B cell (primary cell): ENCODE measurements at regions of chrX and their contacts with region 1.

Region 1: DNA sequence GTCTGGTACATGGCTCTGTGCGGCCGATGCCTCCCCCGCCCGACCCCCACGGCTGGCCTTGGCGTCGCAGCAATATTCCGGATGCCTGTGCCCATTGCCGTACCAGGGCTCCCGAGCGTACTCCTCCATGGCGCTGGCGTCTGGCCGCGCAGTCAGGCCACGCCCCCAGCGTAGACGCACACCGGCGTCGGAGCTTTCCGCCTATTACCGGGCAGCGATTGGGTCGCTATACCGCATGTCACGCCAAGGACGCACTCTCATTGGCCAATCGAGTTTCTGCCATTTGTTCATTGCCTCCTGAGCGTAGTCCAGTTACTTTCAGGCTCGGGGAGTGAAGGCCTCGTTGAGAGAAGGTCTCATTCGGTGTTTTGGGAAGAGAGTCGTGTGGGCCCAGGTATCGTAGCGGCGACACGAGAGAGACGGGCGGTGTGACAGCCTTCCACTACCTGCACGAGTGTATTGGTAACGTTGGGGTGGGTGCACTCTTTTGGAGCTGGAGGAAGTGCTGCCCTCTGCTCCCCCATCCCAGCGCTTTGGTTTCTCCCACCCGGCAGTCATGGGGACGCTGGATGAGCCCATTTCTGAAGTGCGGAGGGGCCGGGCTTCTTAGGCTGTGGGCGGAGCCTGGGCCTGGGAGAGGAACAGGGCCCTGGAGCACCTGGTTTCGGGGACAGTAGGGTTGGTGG is at the starts of genes PQBP1 and TIMM17B:
- DNase-seq: peak; percentile 95
- ATAC-seq: peak; percentile 88
- H3K4me3 ChIP-seq: peak within 1 kb of the TSS; percentile 81 to 91 (median 86)
- H3K4me3 Mint-ChIP-seq: peak within 1 kb of the TSS; percentile 89
- H3K27ac ChIP-seq: peak within 1 kb of the TSS; percentile 93 to 94
- H3K27ac Mint-ChIP-seq: peak within 1 kb of the TSS; percentile 94
- H3K4me1 ChIP-seq: peaks cover 12 to 20% of the 10 kb centered on the region in 2 donors
- H3K4me1 Mint-ChIP-seq: peaks cover 22% of the 10 kb centered on the region
- H3K27me3 ChIP-seq: no peaks in the 10 kb centered on the region
- H3K27me3 Mint-ChIP-seq: no peaks in the 10 kb centered on the region
- CTCF ChIP-seq: no peak
- total RNA-seq, gene PQBP1: 89.5 and 89.9 TPM in 2 replicates
- total RNA-seq, gene TIMM17B: 50.0 and 54.3 TPM in 2 replicates

Region 2: GRCh38 chrX:47836164-47837072 is 1061.3 kb before region 1 on chrX and contains the start of gene ZNF81:
- CTCF ChIA-PET with region 1: no interaction called
- POLR2A ChIA-PET with region 1: no interaction called
- intact Hi-C with region 1: loop called (anchors 10 kb)
- DNase-seq: peak; percentile 93
- ATAC-seq: peak; percentile 97
- H3K4me3 ChIP-seq: peak within 1 kb of the TSS; percentile 66 to 76 (median 70)
- H3K4me3 Mint-ChIP-seq: peak within 1 kb of the TSS; percentile 99
- H3K27ac ChIP-seq: peak within 1 kb of the TSS; percentile 64 to 73
- H3K27ac Mint-ChIP-seq: peak within 1 kb of the TSS; percentile 98
- H3K4me1 ChIP-seq: peaks cover 9% of the 10 kb centered on the region in 2 donors
- H3K4me1 Mint-ChIP-seq: peaks cover 24% of the 10 kb centered on the region
- H3K27me3 ChIP-seq: no peaks in the 10 kb centered on the region
- H3K27me3 Mint-ChIP-seq: no peaks in the 10 kb centered on the region
- CTCF ChIP-seq: no peak
- total RNA-seq, gene ZNF81: 15.3 and 17.7 TPM in 2 replicates

Region 3: GRCh38 chrX:48606091-48606490 is 291.7 kb before region 1 on chrX:
- CTCF ChIA-PET with region 1: no interaction called
- POLR2A ChIA-PET with region 1: no interaction called
- intact Hi-C with region 1: no loop called
- DNase-seq: no peak
- ATAC-seq: no peak
- H3K4me3 ChIP-seq: no peak overlapping the region
- H3K4me3 Mint-ChIP-seq: no peak overlapping the region
- H3K27ac ChIP-seq: no peak overlapping the region
- H3K27ac Mint-ChIP-seq: no peak overlapping the region
- H3K4me1 ChIP-seq: no peaks in the 10 kb centered on the region
- H3K4me1 Mint-ChIP-seq: no peaks in the 10 kb centered on the region
- H3K27me3 ChIP-seq: no peaks in the 10 kb centered on the region
- H3K27me3 Mint-ChIP-seq: no peaks in the 10 kb centered on the region
- CTCF ChIP-seq: no peak

Region 4: DNA sequence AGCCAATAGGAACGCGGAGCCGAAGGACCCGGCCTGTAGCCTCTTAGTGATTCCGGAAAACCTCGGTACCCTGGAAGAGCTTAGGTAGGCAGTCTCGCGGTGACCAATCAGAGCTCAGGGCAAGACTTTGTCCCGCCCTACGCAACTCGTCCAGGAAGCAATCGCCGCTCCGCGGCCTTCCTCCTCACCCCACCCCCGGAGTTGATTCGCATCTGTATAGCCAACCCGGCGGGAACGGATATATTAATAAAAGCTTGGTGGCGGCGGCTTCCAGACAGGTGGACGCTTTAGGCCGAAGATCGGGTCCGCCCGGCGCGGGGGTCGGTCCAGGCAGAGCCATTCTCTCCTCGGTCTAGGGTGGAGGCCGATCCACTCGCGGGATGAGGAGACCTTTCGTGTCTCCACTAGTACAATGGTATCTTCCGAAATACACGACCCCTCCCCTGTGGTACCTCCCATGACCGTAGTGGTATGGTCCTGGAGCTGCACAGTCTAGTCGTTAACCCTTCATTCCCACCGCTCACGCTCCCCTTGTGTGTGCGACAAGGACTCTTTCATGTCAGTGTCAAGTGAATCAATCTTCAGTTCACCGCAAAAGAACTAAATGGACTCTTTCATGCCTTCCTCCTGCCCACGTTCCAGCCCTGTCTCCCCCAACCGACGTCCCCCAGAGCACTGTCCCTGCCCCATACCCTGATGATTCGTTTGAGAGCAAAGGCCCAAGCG is 160.4 kb before region 1 on chrX:
- CTCF ChIA-PET with region 1: no interaction called
- POLR2A ChIA-PET with region 1: no interaction called
- intact Hi-C with region 1: loop called (anchors 1 kb)
- DNase-seq: peak; percentile 94
- ATAC-seq: peak; percentile 98
- H3K4me3 ChIP-seq: peak overlapping the region; percentile 15 to 75 (median 67)
- H3K4me3 Mint-ChIP-seq: peak overlapping the region; percentile 98
- H3K27ac ChIP-seq: peak overlapping the region; percentile 85 to 91
- H3K27ac Mint-ChIP-seq: peak overlapping the region; percentile 96
- H3K4me1 ChIP-seq: peaks cover 0 to 15% of the 10 kb centered on the region in 2 donors
- H3K4me1 Mint-ChIP-seq: peaks cover 13% of the 10 kb centered on the region
- H3K27me3 ChIP-seq: no peaks in the 10 kb centered on the region
- H3K27me3 Mint-ChIP-seq: no peaks in the 10 kb centered on the region
- CTCF ChIP-seq: no peak

Region 5: DNA sequence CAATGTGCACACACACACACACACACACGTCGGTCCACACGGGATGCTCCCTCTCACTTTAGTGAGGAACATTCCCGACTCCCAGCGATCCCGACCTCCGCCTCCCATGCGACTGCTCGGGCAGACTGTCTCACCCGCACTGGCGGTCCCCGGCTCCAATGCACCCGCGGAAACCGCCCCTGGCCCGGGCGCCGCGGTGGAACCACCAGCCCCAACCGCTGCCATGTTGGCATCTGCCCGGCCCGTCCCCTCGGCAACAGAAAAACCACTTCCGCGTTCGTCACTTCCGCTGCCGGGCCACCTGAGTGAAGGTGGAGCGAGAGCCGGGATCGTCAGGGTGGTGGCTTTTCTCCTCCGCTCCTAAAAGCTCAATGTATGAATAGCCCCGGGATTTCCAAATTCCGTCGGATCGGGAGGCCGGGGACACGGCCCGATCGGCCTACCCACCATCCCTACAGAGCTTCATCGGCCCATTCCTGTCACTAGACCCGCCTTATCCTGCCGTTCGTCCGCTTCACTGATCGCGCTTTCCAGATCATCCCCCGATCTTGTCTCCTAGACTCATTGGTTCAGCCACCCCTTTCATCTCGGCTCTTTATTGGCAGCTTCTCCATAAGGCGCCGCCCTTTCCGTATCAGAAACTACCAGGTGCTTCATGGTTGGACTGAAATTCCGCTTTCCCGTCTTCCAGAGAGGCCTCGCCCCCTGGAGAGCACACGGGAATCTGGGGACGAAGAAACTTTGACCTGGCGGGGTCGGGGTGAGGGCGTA is 13.8 kb after region 1 on chrX and contains the start of gene SLC35A2:
- CTCF ChIA-PET with region 1: interaction called, 6 read pairs
- POLR2A ChIA-PET with region 1: interaction called, 4 read pairs
- intact Hi-C with region 1: loop called (anchors 1 kb)
- DNase-seq: peak; percentile 90
- ATAC-seq: peak; percentile 76
- H3K4me3 ChIP-seq: peak within 1 kb of the TSS; percentile 60 to 78 (median 66)
- H3K4me3 Mint-ChIP-seq: peak within 1 kb of the TSS; percentile 86
- H3K27ac ChIP-seq: peak within 1 kb of the TSS; percentile 86 to 90
- H3K27ac Mint-ChIP-seq: peak within 1 kb of the TSS; percentile 88
- H3K4me1 ChIP-seq: peaks cover 28 to 49% of the 10 kb centered on the region in 2 donors
- H3K4me1 Mint-ChIP-seq: peaks cover 48% of the 10 kb centered on the region
- H3K27me3 ChIP-seq: no peaks in the 10 kb centered on the region
- H3K27me3 Mint-ChIP-seq: no peaks in the 10 kb centered on the region
- CTCF ChIP-seq: no peak
- total RNA-seq, gene SLC35A2: 19.1 and 24.1 TPM in 2 replicates

Region 6: GRCh38 chrX:50853399-50853798 is 1955.6 kb after region 1 on chrX:
- CTCF ChIA-PET with region 1: no interaction called
- POLR2A ChIA-PET with region 1: no interaction called
- intact Hi-C with region 1: no loop called
- DNase-seq: no peak
- ATAC-seq: no peak
- H3K4me3 ChIP-seq: no peak overlapping the region
- H3K4me3 Mint-ChIP-seq: no peak overlapping the region
- H3K27ac ChIP-seq: no peak overlapping the region
- H3K27ac Mint-ChIP-seq: no peak overlapping the region
- H3K4me1 ChIP-seq: no peaks in the 10 kb centered on the region
- H3K4me1 Mint-ChIP-seq: no peaks in the 10 kb centered on the region
- H3K27me3 ChIP-seq: no peaks in the 10 kb centered on the region
- H3K27me3 Mint-ChIP-seq: no peaks in the 10 kb centered on the region
- CTCF ChIP-seq: no peak